PC-3 (cell line): ENCODE measurements at regions of chr17 and their contacts with region 1.

Region 1: DNA sequence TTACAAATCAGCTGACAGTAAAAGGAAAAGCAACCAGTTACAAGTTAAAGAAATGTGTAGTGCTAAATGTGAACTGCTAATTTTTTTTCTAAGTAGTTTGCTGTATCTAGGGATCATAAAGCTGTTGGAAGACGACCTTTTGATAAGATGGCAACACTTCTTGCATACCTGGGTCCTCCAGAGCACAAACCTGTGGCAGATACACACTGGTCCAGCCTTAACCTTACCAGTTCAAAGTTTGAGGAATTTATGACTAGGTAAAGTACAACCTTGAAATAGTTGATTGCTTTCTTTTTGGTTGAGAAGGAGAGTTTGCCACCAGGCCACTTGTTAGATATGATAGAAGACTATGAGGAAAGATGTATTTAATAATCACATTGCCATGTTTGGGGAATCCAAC is 35.4 kb downstream of the OMG start:
- DNase-seq: no peak
- ATAC-seq: no peak
- H3K4me3 ChIP-seq: no peak overlapping the region
- H3K27ac ChIP-seq: no peak overlapping the region
- H3K4me1 ChIP-seq: no peaks in the 10 kb centered on the region
- H3K27me3 ChIP-seq: no peaks in the 10 kb centered on the region
- CTCF ChIP-seq: no peak

Region 2: DNA sequence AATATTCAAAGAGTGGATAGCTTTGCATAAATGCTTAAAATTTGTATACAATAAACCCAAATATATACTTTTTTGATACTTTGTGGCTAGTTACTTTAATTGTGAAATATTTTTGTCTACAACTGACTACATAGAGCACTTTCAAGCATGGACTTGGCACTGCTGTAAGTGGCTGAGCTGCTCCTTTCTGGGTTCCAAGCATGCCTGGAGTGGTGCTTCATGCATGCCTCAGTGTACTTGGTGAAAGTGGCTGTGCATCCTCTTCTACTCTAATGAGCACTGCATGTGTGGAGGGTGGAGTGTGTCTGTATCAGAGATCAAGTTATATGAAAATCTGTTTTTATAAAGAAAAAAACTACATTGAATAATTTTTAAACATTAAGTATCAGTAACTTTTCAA is 58.6 kb before region 1 on chr17:
- CTCF ChIA-PET with region 1: no interaction called
- POLR2A ChIA-PET with region 1: no interaction called
- intact Hi-C with region 1: no loop called
- DNase-seq: no peak
- ATAC-seq: no peak
- H3K4me3 ChIP-seq: no peak overlapping the region
- H3K27ac ChIP-seq: no peak overlapping the region
- H3K4me1 ChIP-seq: peaks cover 7% of the 10 kb centered on the region
- H3K27me3 ChIP-seq: no peaks in the 10 kb centered on the region
- CTCF ChIP-seq: no peak

Region 3: GRCh38 chr17:31321481-31321880 is 59.9 kb after region 1 on chr17 and contains the start of gene EVI2A:
- CTCF ChIA-PET with region 1: no interaction called
- POLR2A ChIA-PET with region 1: no interaction called
- intact Hi-C with region 1: no loop called
- DNase-seq: peak; percentile 69
- ATAC-seq: peak; percentile 72
- H3K4me3 ChIP-seq: no peak within 1 kb of the TSS
- H3K27ac ChIP-seq: peak within 1 kb of the TSS; percentile 59
- H3K4me1 ChIP-seq: peaks cover 18% of the 10 kb centered on the region
- H3K27me3 ChIP-seq: no peaks in the 10 kb centered on the region
- CTCF ChIP-seq: no peak
- total RNA-seq, gene EVI2A: 0.92 TPM in 1 of 2 replicates, not detected in the other

Region 4: DNA sequence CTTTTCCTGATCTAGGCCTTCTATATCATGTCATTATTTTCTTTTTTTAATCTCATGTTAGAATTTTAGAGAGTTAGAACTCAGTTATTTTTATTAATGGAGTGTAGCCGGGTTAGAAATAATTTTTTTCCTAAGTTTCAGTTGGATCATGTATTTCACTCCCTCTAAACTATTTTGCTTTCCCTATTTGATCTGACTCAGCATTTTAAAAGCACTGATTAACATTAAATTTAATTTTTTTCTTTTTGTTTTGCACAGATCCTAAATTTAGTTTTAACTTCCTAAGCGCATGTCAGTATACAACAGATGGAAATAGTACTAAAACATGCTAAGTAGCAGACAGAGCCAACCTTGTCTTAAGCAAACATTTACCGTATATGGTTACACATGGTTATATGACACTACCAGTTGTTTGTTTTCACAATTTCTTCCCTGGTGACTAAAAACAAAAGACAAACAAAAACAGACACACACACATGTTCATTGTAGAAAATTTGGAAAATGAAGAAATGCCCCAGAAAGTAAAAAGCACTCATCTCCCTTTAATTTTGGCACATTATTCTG is 96.3 kb after region 1 on chr17:
- CTCF ChIA-PET with region 1: no interaction called
- POLR2A ChIA-PET with region 1: no interaction called
- intact Hi-C with region 1: loop called (anchors 5 kb)
- DNase-seq: peak; percentile 25
- ATAC-seq: peak; percentile 35; the same call in 1 of the 2 replicates
- H3K4me3 ChIP-seq: no peak overlapping the region
- H3K27ac ChIP-seq: no peak overlapping the region
- H3K4me1 ChIP-seq: peaks cover 11% of the 10 kb centered on the region
- H3K27me3 ChIP-seq: no peaks in the 10 kb centered on the region
- CTCF ChIP-seq: no peak